ENCODE measurements at regions of chr12 and their contacts with region 1.

Region 1: GRCh38 chr12:90959538-90960139 is 4.7 kb upstream of the CCER1 start:
- DNase-seq: peak; percentile 54
- H3K4me3 ChIP-seq: no peak overlapping the region
- H3K27ac ChIP-seq: no peak overlapping the region
- H3K4me1 ChIP-seq: no peaks in the 10 kb centered on the region
- H3K27me3 ChIP-seq: no peaks in the 10 kb centered on the region
- CTCF ChIP-seq: peak; percentile 57 to 74
- POLR2A ChIP-seq: no peak

Region 2: GRCh38 chr12:90970473-90970872 is 10.8 kb after region 1 on chr12:
- CTCF ChIA-PET with region 1: interaction called, 19 read pairs
- POLR2A ChIA-PET with region 1: no interaction called
- dilution Hi-C with region 1: no loop called
- intact Hi-C with region 1: no loop called
- DNase-seq: peak; percentile 84
- H3K4me3 ChIP-seq: no peak overlapping the region
- H3K27ac ChIP-seq: peak overlapping the region; percentile 4
- H3K4me1 ChIP-seq: peaks cover 11% of the 10 kb centered on the region
- H3K27me3 ChIP-seq: no peaks in the 10 kb centered on the region
- CTCF ChIP-seq: no peak
- POLR2A ChIP-seq: no peak

Measured in endothelial cell of umbilical vein (primary cell).